ENCODE measurements at regions of chr9 and their contacts with region 1.

Region 1: GRCh38 chr9:19925817-19926503 is 137.1 kb upstream of the SLC24A2 start:
- DNase-seq: peak; percentile 83
- ATAC-seq: peak; percentile 89
- H3K4me3 ChIP-seq: peak overlapping the region; percentile 44; the same call in 1 of the 2 replicates
- H3K27ac ChIP-seq: no peak overlapping the region
- H3K4me1 ChIP-seq: no peaks in the 10 kb centered on the region
- H3K27me3 ChIP-seq: no peaks in the 10 kb centered on the region
- CTCF ChIP-seq: peak; percentile 86

Region 2: DNA sequence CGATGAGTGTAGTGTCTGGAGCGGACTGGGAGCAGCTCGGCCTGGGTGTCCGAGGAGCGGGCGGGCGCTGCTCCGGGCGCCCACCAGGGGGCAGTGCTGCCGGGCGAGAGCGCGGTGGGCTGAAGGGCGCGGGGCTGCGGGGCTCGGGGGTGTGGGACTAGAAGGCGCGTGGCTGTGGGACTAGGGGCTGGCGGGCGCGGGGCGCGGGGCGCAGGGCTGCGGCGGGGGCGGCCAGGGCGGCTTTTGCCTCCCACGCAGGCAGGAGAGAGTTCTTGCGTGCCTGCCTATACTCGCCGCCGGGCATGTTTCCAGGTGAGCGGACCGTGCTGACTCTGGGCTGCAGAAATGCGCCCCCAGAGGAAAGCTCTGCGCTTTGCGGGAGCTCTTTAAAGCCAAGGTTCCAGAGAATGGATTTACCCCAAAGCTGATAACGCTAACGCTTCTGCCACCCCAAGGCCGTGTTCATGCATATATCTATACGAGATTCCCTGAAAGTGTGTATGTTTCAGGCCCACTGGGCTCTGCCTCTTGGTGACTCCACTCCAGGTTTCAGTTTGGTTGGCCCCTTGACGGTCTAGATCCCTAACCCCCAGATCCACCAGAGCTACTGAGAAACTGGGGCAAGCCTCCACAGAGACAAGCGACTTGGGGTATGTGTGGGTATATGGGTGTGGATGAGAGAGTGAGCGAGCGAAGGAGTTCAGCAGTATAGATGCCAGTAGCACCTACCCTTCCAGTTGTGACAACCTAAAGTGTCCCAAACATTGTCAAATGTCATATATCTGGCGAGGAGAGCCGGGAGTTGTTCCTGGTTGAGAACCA is 461.0 kb before region 1 on chr9:
- CTCF ChIA-PET with region 1: interaction called, 3 read pairs
- POLR2A ChIA-PET with region 1: no interaction called
- intact Hi-C with region 1: loop called (anchors 2 kb)
- DNase-seq: peak; percentile 67
- ATAC-seq: peak; percentile 96
- H3K4me3 ChIP-seq: peak overlapping the region; percentile 74
- H3K27ac ChIP-seq: no peak overlapping the region
- H3K4me1 ChIP-seq: no peaks in the 10 kb centered on the region
- H3K27me3 ChIP-seq: no peaks in the 10 kb centered on the region
- CTCF ChIP-seq: peak; percentile 72

Region 3: DNA sequence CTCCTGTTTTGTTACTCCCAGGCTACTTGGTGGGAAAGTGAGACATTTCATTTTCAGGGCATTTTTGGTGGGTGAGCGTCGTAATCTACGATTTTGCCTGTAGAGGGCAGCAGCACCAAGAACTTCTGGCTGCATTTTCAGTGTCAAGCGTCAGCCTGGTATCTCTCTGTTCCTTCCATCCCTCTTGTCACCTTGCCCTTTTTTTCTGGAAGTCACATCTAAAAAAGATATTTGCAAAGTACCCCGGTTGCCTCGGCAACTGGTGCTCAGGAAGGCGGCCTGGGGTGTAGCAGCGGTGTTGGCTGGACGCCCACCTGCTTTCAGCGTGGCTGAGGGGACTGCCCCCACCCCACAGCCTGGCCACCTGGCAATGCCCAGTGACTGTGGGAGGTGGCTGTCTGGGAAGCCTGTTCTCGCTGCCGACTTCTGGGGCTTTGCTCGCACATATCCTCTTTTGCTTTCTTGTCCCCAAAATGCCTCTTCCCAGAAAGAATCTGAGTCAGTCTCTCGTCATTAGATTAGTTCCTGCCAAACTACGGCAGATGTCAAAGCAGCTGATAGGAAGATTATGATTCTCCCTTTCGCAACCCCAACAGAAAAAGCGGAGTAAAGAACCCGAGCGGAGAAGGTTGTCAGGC is 432.7 kb before region 1 on chr9:
- CTCF ChIA-PET with region 1: no interaction called
- POLR2A ChIA-PET with region 1: no interaction called
- intact Hi-C with region 1: loop called (anchors 1 kb)
- DNase-seq: peak; percentile 69
- ATAC-seq: peak; percentile 76
- H3K4me3 ChIP-seq: peak overlapping the region; percentile 61
- H3K27ac ChIP-seq: no peak overlapping the region
- H3K4me1 ChIP-seq: 0 out of 2 replicates have a peak, but pooled peaks cover 8% of the 10 kb centered on the region
- H3K27me3 ChIP-seq: peaks cover 18% of the 10 kb centered on the region
- CTCF ChIP-seq: peak; percentile 73

Region 4: GRCh38 chr9:19809401-19810269 is 116.3 kb before region 1 on chr9:
- CTCF ChIA-PET with region 1: no interaction called
- POLR2A ChIA-PET with region 1: no interaction called
- intact Hi-C with region 1: no loop called
- DNase-seq: no peak
- ATAC-seq: no peak
- H3K4me3 ChIP-seq: peak overlapping the region; percentile 43
- H3K27ac ChIP-seq: no peak overlapping the region
- H3K4me1 ChIP-seq: no peaks in the 10 kb centered on the region
- H3K27me3 ChIP-seq: peaks cover 7% of the 10 kb centered on the region
- CTCF ChIP-seq: no peak

Region 5: GRCh38 chr9:20087481-20087880 is 161.5 kb after region 1 on chr9:
- CTCF ChIA-PET with region 1: no interaction called
- POLR2A ChIA-PET with region 1: no interaction called
- intact Hi-C with region 1: no loop called
- DNase-seq: no peak
- ATAC-seq: no peak
- H3K4me3 ChIP-seq: no peak overlapping the region
- H3K27ac ChIP-seq: no peak overlapping the region
- H3K4me1 ChIP-seq: no peaks in the 10 kb centered on the region
- H3K27me3 ChIP-seq: 0 out of 2 replicates have a peak, but pooled peaks cover 10% of the 10 kb centered on the region
- CTCF ChIP-seq: no peak

Region 6: DNA sequence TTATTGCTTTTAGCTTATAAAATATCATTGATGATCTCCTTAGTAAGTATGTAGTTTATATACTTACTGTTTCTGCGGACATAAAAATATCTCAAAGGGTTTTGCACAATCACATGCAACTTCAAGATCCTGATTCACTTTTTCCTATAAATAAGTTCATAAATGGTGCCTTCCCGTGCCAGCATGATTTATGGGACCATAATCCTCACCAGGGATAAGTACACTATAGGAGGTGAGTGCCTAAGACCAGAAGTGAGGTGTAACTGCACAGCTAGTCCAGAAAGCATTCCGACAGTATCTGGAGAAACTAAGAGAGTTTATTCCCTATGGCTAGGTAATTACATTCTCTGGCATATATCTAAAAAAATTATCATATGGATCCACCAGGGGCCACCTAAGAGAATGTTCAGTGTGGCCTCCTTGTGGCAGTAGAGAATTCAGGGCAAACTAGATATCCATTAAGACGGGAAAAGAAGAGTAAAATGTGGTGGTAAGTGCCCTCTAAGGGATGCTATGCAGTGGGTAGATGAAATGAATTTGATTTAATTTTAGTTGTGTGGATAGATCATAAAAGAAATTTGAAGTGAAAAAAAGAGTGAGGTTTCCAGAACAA is 265.4 kb after region 1 on chr9:
- CTCF ChIA-PET with region 1: no interaction called
- POLR2A ChIA-PET with region 1: no interaction called
- intact Hi-C with region 1: loop called (anchors 1 kb)
- DNase-seq: peak; percentile 40
- ATAC-seq: peak; percentile 60
- H3K4me3 ChIP-seq: no peak overlapping the region
- H3K27ac ChIP-seq: no peak overlapping the region
- H3K4me1 ChIP-seq: no peaks in the 10 kb centered on the region
- H3K27me3 ChIP-seq: peaks cover 31% of the 10 kb centered on the region
- CTCF ChIP-seq: peak; percentile 54

Region 7: GRCh38 chr9:21121595-21122251 is 1195.8 kb after region 1 on chr9:
- CTCF ChIA-PET with region 1: no interaction called
- POLR2A ChIA-PET with region 1: no interaction called
- intact Hi-C with region 1: loop called (anchors 10 kb)
- DNase-seq: no peak
- ATAC-seq: no peak
- H3K4me3 ChIP-seq: no peak overlapping the region
- H3K27ac ChIP-seq: no peak overlapping the region
- H3K4me1 ChIP-seq: no peaks in the 10 kb centered on the region
- H3K27me3 ChIP-seq: peaks cover 37% of the 10 kb centered on the region
- CTCF ChIP-seq: no peak

Measured in PC-3 (cell line).